ENCODE measurements at regions of chr11 and their contacts with region 1.

Region 1: DNA sequence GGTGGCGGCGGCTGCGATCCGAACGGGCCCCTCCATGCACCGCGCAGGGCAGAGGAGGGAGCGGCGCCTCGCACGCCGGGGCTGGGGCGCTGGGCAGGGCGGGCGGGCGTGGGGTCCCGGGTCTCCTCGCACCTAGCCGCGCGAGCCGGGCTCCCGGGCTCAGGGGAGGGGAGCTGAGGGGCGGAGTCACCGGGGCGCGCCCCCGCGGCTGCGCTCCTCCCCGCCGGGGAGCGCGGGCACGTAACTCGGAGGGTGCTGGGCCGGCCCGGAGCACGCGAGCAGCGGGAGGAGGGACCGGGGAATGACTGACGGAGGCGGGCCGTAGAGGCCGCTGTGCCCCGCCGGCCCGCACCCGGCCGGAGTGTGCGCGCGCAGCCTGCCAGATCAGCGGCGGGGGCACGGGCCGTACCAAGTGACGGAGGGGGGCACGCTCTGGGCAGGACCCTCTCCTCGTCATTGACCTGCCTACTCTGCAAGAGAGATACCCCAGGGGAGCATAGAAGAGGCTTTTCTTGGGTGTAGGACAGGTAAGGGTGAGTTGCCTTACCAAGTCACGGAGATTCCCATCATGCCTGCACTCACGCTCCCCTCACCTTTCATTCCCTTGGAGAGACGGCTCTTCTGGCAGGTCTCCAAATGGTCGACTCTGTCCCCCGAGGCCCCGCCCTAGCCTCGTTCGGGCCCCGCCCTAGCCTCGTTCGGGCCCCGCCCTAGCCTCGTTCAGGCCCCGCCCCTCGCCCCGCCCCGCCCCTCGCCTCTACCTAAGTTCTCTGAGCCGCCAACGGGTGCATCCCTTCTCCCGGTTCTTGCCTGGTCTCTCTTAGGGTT is at the start of gene CDON:
- DNase-seq: peak; percentile 92
- H3K4me3 Mint-ChIP-seq: peak within 1 kb of the TSS; percentile 74
- H3K27ac Mint-ChIP-seq: peak within 1 kb of the TSS; percentile 98
- H3K4me1 Mint-ChIP-seq: peaks cover 6% of the 10 kb centered on the region
- H3K27me3 Mint-ChIP-seq: no peaks in the 10 kb centered on the region
- CTCF ChIP-seq: no peak
- total RNA-seq, gene CDON: 0.91 and 0.96 TPM in 2 replicates

Region 2: DNA sequence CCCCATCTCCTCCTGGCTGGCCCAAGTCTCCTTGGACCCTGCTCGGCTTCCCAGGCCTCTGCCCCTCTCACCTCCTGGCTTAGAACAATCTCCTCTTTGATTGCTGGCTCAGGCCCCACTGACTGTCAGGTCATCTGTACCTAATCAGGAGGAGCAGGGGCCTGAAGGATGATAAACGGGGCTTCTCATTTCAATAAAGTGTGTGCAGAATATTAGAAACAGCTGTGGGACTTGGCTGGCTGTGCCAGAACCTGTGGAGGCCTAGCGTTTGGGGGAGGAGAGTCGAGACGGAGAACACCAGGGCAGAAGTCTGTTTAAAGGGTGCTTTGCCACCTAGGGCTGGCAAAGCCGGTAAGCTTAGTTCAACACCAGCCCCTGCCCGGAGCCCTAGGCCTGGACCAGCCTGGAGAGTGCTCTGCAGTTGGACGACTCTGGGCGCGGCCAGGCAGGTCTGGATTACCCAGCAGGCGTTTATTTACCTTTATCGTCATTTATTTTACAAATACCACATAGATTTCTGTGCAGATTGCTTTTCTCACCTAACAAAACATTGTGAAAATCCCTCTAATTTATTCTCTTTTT is 127.2 kb before region 1 on chr11:
- CTCF ChIA-PET with region 1: interaction called, 137 read pairs
- POLR2A ChIA-PET with region 1: interaction called, 7 read pairs
- intact Hi-C with region 1: no loop called
- DNase-seq: no peak
- H3K4me3 Mint-ChIP-seq: no peak overlapping the region
- H3K27ac Mint-ChIP-seq: no peak overlapping the region
- H3K4me1 Mint-ChIP-seq: no peaks in the 10 kb centered on the region
- H3K27me3 Mint-ChIP-seq: no peaks in the 10 kb centered on the region
- CTCF ChIP-seq: no peak

Region 3: GRCh38 chr11:125950696-125951651 is 111.9 kb before region 1 on chr11:
- CTCF ChIA-PET with region 1: interaction called, 137 read pairs
- POLR2A ChIA-PET with region 1: no interaction called
- intact Hi-C with region 1: no loop called
- DNase-seq: peak; percentile 36
- H3K4me3 Mint-ChIP-seq: no peak overlapping the region
- H3K27ac Mint-ChIP-seq: no peak overlapping the region
- H3K4me1 Mint-ChIP-seq: peaks cover 12% of the 10 kb centered on the region
- H3K27me3 Mint-ChIP-seq: no peaks in the 10 kb centered on the region
- CTCF ChIP-seq: no peak

Region 4: DNA sequence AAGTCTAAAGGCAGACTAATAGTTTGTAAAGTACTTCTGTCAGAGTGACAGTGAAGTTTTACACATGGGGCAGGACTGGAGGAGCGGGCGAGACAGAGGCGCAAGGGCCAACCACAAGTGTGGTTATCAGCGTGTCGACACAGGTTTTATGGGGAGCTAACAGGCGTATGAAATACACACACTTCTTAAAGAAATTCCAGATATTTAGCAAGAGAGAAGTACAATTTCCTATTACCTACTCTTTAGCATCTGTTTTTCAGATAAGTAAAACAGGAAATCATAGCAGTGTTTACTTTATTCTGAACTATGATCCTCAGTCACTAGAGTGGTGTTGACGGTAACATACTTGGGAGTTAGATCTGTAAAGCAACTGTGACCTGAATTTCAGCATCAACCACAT is 94.5 kb before region 1 on chr11:
- CTCF ChIA-PET with region 1: interaction called, 20 read pairs
- POLR2A ChIA-PET with region 1: no interaction called
- intact Hi-C with region 1: no loop called
- DNase-seq: peak; percentile 24
- H3K4me3 Mint-ChIP-seq: no peak overlapping the region
- H3K27ac Mint-ChIP-seq: peak overlapping the region; percentile 7
- H3K4me1 Mint-ChIP-seq: peaks cover 8% of the 10 kb centered on the region
- H3K27me3 Mint-ChIP-seq: no peaks in the 10 kb centered on the region
- CTCF ChIP-seq: no peak

Region 5: DNA sequence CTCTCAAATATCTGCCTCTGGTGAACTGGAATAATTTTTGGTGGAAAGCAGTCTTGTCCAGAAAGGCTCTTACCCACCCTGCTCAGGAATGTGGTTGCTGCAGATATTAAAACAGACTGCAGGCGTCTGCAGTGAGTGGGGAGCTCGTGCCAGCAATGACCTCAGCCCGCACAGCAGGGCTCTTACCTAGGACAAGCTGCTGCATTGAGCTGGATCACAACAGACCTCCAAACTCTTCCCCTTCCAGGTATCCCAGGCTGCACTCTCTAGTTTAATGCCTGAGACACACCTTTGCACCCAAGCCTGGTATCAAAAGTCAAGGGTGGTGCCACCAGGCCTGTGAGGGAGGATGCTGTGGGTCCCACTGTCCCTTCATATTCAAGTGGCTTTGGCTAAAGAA is 69.4 kb after region 1 on chr11:
- CTCF ChIA-PET with region 1: interaction called, 15 read pairs
- POLR2A ChIA-PET with region 1: interaction called, 5 read pairs
- intact Hi-C with region 1: no loop called
- DNase-seq: peak; percentile 63
- H3K4me3 Mint-ChIP-seq: peak overlapping the region; percentile 68
- H3K27ac Mint-ChIP-seq: peak overlapping the region; percentile 99
- H3K4me1 Mint-ChIP-seq: peaks cover 17% of the 10 kb centered on the region
- H3K27me3 Mint-ChIP-seq: no peaks in the 10 kb centered on the region
- CTCF ChIP-seq: no peak

Region 6: DNA sequence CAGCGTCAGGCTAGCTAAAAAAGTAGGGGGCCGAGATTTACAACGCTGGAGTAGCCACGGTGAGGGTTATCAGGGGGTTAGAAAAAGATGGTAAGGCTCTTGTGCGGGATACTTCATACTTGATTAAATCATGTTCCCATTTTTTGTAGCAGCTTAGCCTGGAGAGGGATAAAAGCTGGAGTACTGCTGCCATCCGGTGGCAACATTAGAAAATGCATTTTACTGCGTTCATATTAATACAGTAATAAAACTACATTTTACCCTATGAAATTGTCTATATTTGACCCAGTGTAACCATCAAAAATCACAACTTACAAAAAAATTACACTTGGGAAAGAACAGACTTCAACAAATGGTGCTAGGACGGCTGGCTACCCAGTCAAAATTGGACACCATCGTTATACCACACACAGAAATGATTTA is 131.2 kb after region 1 on chr11:
- CTCF ChIA-PET with region 1: interaction called, 30 read pairs
- POLR2A ChIA-PET with region 1: interaction called, 5 read pairs
- intact Hi-C with region 1: loop called (anchors 5 kb)
- DNase-seq: peak; percentile 59
- H3K4me3 Mint-ChIP-seq: no peak overlapping the region
- H3K27ac Mint-ChIP-seq: no peak overlapping the region
- H3K4me1 Mint-ChIP-seq: peaks cover 10% of the 10 kb centered on the region
- H3K27me3 Mint-ChIP-seq: no peaks in the 10 kb centered on the region
- CTCF ChIP-seq: peak; percentile 65

Measured in MCF 10A (cell line).